Naive thymus-derived CD4-positive, alpha-beta T cell (primary cell): ENCODE measurements at regions of chr2 and their contacts with region 1.

Region 1: GRCh38 chr2:170973492-170974303 is 44.6 kb downstream of the GORASP2 start:
- DNase-seq: peak; percentile 86 to 96 (median 91)
- ATAC-seq: peak; percentile 99
- H3K4me3 ChIP-seq: peak overlapping the region; percentile 84
- H3K4me3 Mint-ChIP-seq: peak overlapping the region; percentile 51 to 87 (median 84)
- H3K27ac ChIP-seq: peak overlapping the region; percentile 67
- H3K27ac Mint-ChIP-seq: peak overlapping the region; percentile 33 to 90 (median 79)
- H3K4me1 ChIP-seq: peaks cover 4 to 11% of the 10 kb centered on the region in 2 donors
- H3K4me1 Mint-ChIP-seq: peaks cover 5 to 20% (median 10%) of the 10 kb centered on the region in 7 donors
- H3K27me3 ChIP-seq: no peaks in the 10 kb centered on the region
- H3K27me3 Mint-ChIP-seq: no peaks in the 10 kb centered on the region

Region 2: GRCh38 chr2:170991399-170992182 is 17.9 kb after region 1 on chr2:
- CTCF ChIA-PET with region 1: no interaction called
- POLR2A ChIA-PET with region 1: no interaction called
- intact Hi-C with region 1: loop called in 1 of 2 experiments (anchors 2 kb)
- DNase-seq: no peak
- ATAC-seq: no peak
- H3K4me3 ChIP-seq: no peak overlapping the region
- H3K4me3 Mint-ChIP-seq: no peak overlapping the region
- H3K27ac ChIP-seq: no peak overlapping the region
- H3K27ac Mint-ChIP-seq: peak overlapping the region in 6 of 9 donors; percentile 15 to 63 (median 36)
- H3K4me1 ChIP-seq: no peaks in the 10 kb centered on the region
- H3K4me1 Mint-ChIP-seq: peaks cover 0 to 19% (median 10%) of the 10 kb centered on the region in 7 donors
- H3K27me3 ChIP-seq: no peaks in the 10 kb centered on the region
- H3K27me3 Mint-ChIP-seq: no peaks in the 10 kb centered on the region

Region 3: DNA sequence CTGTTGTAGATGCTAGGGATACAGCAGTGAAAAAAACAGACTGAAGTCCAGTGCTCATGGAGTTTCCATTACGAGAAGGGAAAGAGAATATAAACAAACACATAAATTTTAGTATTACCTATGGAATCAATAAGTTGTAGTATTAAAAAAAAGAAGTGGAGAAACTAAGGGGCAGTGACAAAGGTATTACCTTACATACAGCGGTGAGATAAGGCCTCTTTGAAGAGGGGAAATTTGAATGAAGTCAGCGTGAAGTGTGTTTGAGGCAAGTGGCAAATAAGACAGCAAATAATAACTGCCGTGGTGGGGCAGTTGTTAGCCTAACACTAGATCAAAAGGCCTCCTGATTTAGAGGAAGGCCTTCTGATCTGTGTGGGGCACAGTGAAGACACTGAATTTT is 129.1 kb after region 1 on chr2:
- CTCF ChIA-PET with region 1: no interaction called
- POLR2A ChIA-PET with region 1: interaction called, 3 read pairs
- intact Hi-C with region 1: loop called in 1 of 2 experiments (anchors 5 kb)
- DNase-seq: peak in 1 of 9 donors; percentile 27
- ATAC-seq: peak; percentile 48
- H3K4me3 ChIP-seq: no peak overlapping the region
- H3K4me3 Mint-ChIP-seq: peak overlapping the region in 7 of 10 donors; percentile 3 to 46 (median 40)
- H3K27ac ChIP-seq: no peak overlapping the region
- H3K27ac Mint-ChIP-seq: peak overlapping the region in 8 of 9 donors; percentile 42 to 84 (median 61)
- H3K4me1 ChIP-seq: peaks cover 0 to 7% of the 10 kb centered on the region in 2 donors
- H3K4me1 Mint-ChIP-seq: peaks cover 14 to 72% (median 56%) of the 10 kb centered on the region in 7 donors
- H3K27me3 ChIP-seq: no peaks in the 10 kb centered on the region
- H3K27me3 Mint-ChIP-seq: no peaks in the 10 kb centered on the region